ENCODE measurements at regions of chr12 and their contacts with region 1.

Region 1: DNA sequence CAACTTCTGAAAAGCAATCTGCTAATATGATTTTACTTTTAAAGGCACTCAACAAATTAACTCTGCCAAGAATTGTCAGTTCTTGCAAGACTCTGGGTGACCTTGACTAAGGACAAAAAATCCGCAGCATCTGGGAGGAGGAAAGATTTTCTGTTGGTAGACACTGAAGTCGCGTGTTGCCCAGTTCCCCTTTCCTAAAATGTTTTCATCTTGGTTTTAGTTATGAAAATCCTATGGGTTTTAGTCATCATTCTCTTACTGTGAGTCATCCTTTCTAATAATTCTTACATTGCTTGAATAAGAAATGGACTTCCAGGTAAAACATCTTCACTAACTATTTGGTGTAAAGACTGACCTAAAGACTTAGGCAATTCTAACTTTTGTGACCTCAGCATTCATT is 9.1 kb downstream of the GSG1 start:
- DNase-seq: peak; percentile 70
- ATAC-seq: peak; percentile 22
- H3K4me3 ChIP-seq: no peak overlapping the region
- H3K27ac ChIP-seq: peak overlapping the region; percentile 26; the same call in 1 of the 2 replicates
- H3K4me1 ChIP-seq: peaks cover 27% of the 10 kb centered on the region
- H3K27me3 ChIP-seq: no peaks in the 10 kb centered on the region
- CTCF ChIP-seq: no peak
- POLR2A ChIP-seq: no peak
- RAD21 ChIP-seq: no peak

Region 2: DNA sequence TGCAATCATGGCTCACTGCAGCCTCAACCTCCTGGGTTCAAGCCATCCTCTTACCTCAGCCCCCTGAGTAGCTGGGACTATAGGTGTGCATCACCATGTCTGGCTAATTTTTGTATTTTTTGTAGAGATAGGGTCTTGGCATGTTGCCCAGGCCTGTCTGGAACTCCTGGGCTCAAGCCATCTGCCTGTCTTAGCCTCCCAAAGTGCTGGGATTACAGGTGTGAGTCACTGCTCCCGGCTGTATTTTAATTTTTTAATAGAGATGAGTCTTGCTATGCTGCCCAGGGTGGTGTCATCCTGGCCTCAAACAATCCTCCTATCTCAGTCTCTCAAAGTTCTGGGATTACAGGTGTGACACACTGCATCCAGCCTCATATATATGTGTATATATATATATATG is 234.7 kb before region 1 on chr12:
- CTCF ChIA-PET with region 1: no interaction called
- POLR2A ChIA-PET with region 1: no interaction called
- dilution Hi-C with region 1: no loop called
- in situ Hi-C with region 1: no loop called
- intact Hi-C with region 1: no loop called
- DNase-seq: peak; percentile 35
- ATAC-seq: peak; percentile 21; the same call in 1 of the 2 replicates
- H3K4me3 ChIP-seq: no peak overlapping the region
- H3K27ac ChIP-seq: no peak overlapping the region
- H3K4me1 ChIP-seq: no peaks in the 10 kb centered on the region
- H3K27me3 ChIP-seq: no peaks in the 10 kb centered on the region
- CTCF ChIP-seq: no peak
- POLR2A ChIP-seq: no peak
- RAD21 ChIP-seq: no peak

Region 3: GRCh38 chr12:12916135-12916944 is 178.0 kb before region 1 on chr12:
- CTCF ChIA-PET with region 1: no interaction called
- POLR2A ChIA-PET with region 1: no interaction called
- dilution Hi-C with region 1: no loop called
- in situ Hi-C with region 1: loop called (anchors 10 kb)
- intact Hi-C with region 1: loop called (anchors 1 kb)
- DNase-seq: peak; percentile 73
- ATAC-seq: peak; percentile 91
- H3K4me3 ChIP-seq: no peak overlapping the region
- H3K27ac ChIP-seq: no peak overlapping the region
- H3K4me1 ChIP-seq: peaks cover 10% of the 10 kb centered on the region
- H3K27me3 ChIP-seq: no peaks in the 10 kb centered on the region
- CTCF ChIP-seq: peak; percentile 95
- POLR2A ChIP-seq: peak; percentile 56
- RAD21 ChIP-seq: peak; percentile 97

Region 4: DNA sequence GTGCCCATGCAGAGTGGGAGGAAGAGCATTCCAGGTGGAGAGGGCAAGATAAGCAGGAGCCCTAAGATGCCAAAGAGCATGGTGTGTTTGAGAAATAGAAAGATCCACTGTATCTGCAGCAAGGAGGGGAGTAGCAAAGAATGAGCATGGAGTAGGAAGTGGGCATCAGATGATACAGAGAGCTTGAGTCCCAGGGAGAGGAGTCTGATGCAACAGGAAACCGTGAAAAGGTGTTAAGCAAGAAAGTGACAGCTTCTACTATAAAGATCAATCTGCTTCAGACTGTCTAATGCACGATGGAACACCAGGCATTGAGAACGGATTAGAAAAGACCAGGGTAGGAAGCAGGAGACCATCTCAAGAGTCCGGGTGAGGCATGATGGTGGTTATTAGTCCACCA is 130.1 kb before region 1 on chr12:
- CTCF ChIA-PET with region 1: no interaction called
- POLR2A ChIA-PET with region 1: no interaction called
- dilution Hi-C with region 1: no loop called
- in situ Hi-C with region 1: no loop called
- intact Hi-C with region 1: no loop called
- DNase-seq: no peak
- ATAC-seq: no peak
- H3K4me3 ChIP-seq: no peak overlapping the region
- H3K27ac ChIP-seq: no peak overlapping the region
- H3K4me1 ChIP-seq: peaks cover 5% of the 10 kb centered on the region; the same call in 1 of the 2 replicates
- H3K27me3 ChIP-seq: no peaks in the 10 kb centered on the region
- CTCF ChIP-seq: no peak
- POLR2A ChIP-seq: no peak
- RAD21 ChIP-seq: no peak

Region 5: GRCh38 chr12:13023811-13024530 is 70.4 kb before region 1 on chr12:
- CTCF ChIA-PET with region 1: interaction called, 5 read pairs
- POLR2A ChIA-PET with region 1: interaction called, 4 read pairs
- dilution Hi-C with region 1: no loop called
- in situ Hi-C with region 1: no loop called
- intact Hi-C with region 1: loop called (anchors 1 kb)
- DNase-seq: peak; percentile 82
- ATAC-seq: peak; percentile 94
- H3K4me3 ChIP-seq: no peak overlapping the region
- H3K27ac ChIP-seq: no peak overlapping the region
- H3K4me1 ChIP-seq: peaks cover 3% of the 10 kb centered on the region
- H3K27me3 ChIP-seq: peaks cover 2% of the 10 kb centered on the region; the same call in 1 of the 2 replicates
- CTCF ChIP-seq: peak; percentile 80
- POLR2A ChIP-seq: 0 out of 2 replicates have a peak, but pooled peaks have one; percentile 46
- RAD21 ChIP-seq: peak; percentile 85

Region 6: GRCh38 chr12:13074396-13075107 is 19.8 kb before region 1 on chr12:
- CTCF ChIA-PET with region 1: no interaction called
- POLR2A ChIA-PET with region 1: no interaction called
- dilution Hi-C with region 1: no loop called
- in situ Hi-C with region 1: no loop called
- intact Hi-C with region 1: no loop called
- DNase-seq: peak; percentile 40
- ATAC-seq: peak; percentile 60
- H3K4me3 ChIP-seq: no peak overlapping the region
- H3K27ac ChIP-seq: no peak overlapping the region
- H3K4me1 ChIP-seq: peaks cover 9% of the 10 kb centered on the region
- H3K27me3 ChIP-seq: no peaks in the 10 kb centered on the region
- CTCF ChIP-seq: no peak
- POLR2A ChIP-seq: no peak
- RAD21 ChIP-seq: no peak

Region 7: DNA sequence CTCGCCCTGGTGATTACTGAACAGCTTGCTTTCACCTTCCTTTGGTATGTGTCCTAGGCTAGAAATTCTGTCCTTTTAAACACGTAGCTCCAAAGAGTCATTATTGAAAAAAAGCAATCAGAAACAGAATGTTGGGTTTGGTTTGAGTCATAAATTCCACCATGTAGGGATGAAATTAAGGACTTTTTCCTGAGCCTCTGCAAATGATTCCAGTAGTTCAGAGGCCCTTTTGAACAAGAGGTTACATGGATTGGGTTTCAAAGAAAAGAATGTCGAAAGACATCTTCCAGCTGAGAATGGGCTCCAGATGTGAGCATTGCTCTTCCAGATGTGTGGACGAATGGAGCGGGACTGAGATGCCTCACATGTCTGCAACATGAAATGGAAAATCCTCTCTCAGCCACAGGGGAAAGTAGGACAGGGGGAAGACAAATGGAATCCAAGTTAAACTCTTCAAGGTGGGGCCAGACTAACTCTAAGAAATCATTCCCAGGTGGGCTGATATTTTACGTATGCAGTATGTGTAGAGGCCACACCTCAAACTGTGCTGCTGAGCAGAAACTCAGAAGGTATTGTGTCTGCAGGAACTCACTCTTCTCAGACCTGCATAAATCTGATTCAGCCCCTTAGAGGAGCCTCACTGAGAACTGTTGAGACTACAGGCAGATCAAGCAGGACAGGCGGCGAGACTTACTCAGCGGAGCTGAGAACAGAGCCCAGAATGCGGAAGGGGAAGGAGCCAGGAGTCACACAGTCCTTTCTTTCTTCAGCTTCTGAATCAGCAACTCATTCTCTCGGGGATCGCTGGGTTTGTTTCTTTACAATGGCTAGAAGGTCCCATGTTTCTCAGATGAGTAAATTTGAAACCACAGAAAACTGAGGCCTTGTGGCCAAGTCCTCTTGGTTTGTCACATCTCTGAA is 78.9 kb after region 1 on chr12:
- CTCF ChIA-PET with region 1: no interaction called
- POLR2A ChIA-PET with region 1: no interaction called
- dilution Hi-C with region 1: no loop called
- in situ Hi-C with region 1: no loop called
- intact Hi-C with region 1: loop called (anchors 1 kb)
- DNase-seq: peak; percentile 97
- ATAC-seq: peak; percentile 97
- H3K4me3 ChIP-seq: no peak overlapping the region
- H3K27ac ChIP-seq: peak overlapping the region; percentile 84
- H3K4me1 ChIP-seq: peaks cover 23% of the 10 kb centered on the region
- H3K27me3 ChIP-seq: no peaks in the 10 kb centered on the region
- CTCF ChIP-seq: no peak
- POLR2A ChIP-seq: peak; percentile 67; the same call in 1 of the 2 replicates
- RAD21 ChIP-seq: peak; percentile 19; the same call in 1 of the 2 replicates

Region 8: DNA sequence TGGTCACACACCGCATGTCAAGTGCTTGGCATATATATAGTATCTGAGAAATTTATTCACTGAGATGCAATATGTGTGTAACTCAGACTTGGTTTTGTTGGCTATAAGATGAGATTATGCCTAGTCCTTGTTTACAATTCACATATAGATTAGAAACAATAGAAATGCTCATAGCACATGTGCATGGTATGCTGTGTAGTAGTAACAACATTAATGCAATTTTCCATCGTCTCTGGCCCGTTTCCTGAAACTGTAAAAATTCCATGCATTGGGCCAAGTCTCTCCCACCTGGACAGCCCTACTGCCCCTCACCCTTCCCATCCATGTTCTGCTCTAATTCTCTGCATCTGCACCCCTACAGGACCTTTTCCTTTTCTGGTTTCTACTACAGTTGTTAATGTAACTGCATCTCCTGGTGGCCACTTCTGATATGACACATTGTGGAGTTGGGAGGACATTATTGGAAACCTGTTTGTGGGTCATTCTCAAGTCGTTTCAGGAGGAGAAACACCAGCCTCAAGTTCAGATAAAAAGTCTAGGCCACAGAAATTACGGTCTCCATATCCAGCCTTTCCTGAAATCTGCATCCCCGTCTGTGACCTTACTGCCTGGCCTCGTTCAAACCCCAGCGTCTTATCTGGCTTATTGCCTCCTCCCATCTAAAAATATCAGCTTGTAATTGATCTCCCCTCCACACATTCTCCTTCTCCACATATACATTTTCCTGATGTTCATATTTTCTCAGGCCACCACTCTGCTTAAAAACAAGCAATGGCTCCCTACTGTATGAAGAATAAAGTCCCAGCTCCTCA is 139.7 kb after region 1 on chr12:
- CTCF ChIA-PET with region 1: interaction called, 3 read pairs
- POLR2A ChIA-PET with region 1: no interaction called
- dilution Hi-C with region 1: no loop called
- in situ Hi-C with region 1: no loop called
- intact Hi-C with region 1: loop called (anchors 1 kb)
- DNase-seq: peak; percentile 70
- ATAC-seq: peak; percentile 98
- H3K4me3 ChIP-seq: no peak overlapping the region
- H3K27ac ChIP-seq: no peak overlapping the region
- H3K4me1 ChIP-seq: no peaks in the 10 kb centered on the region
- H3K27me3 ChIP-seq: no peaks in the 10 kb centered on the region
- CTCF ChIP-seq: peak; percentile 90
- POLR2A ChIP-seq: no peak
- RAD21 ChIP-seq: peak; percentile 92